ENCODE measurements at regions of chr3 and their contacts with region 1.

Region 1: DNA sequence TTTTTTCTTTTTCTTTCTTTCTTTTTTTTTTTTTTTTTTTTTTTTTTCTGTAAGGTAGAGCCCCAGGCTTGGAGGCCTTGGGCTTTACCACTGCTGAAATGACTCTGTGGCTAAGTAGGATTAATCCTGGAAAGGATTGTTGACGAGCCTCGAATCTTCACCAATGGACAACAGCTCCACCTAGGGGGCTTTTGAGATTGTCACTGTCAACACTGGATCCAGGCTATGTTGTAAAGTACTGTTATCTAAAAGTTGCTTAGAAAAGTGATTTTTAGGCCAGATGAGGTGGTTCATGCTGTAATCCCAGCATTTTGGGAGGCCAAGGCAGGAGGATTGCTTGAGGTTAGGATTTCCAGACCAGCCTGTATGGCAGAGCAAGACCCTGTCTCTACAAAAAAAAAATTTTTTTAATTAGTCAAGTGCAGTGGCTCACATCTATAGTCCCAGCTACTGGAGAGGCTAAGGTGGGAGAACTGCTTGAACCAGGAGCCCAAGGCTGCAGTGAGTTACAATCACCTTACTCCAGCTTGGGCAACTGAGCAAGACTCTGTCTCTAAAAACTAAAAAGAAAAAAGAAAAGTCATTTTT is 41.6 kb downstream of the KLHL18 start:
- DNase-seq: peak in 1 of 2 donors; percentile 77
- ATAC-seq: peak; percentile 83 to 95 (median 91)
- H3K4me3 ChIP-seq: no peak overlapping the region
- H3K27ac ChIP-seq: no peak overlapping the region
- H3K4me1 ChIP-seq: peaks cover 0 to 3% (median 0%) of the 10 kb centered on the region in 9 donors
- H3K27me3 ChIP-seq: no peaks in the 10 kb centered on the region
- CTCF ChIP-seq: peak; percentile 61 to 83 (median 73)

Region 2: DNA sequence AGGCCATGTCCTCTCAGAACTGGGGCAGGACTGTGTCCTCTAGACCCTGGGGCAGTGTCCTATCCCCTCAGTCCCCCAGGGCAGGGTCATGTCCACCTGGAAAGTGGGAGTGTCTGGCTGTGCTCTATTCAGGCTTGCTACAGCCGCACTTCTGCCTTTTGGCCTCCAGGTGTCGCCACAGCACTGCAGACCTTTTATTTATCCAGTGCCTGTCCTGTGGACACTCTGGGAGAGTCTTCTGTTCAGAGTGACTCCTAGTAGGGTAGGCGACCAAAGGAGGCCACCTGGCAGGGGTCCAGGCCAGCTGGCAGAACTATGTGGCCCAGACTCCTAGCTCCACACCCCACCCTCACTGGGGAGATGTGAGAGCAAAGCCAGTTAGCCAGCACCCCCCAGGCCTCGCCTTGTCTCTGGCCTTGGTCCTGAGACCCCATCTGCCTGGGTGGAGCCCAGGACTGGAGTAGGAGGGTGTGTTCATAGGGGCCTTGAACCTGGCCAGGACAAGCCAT is 619.3 kb before region 1 on chr3:
- intact Hi-C with region 1: loop called in 4 of 10 experiments (anchors 2 to 10 kb)
- DNase-seq: peak; percentile 71 to 73
- ATAC-seq: peak; percentile 73 to 91 (median 83)
- H3K4me3 ChIP-seq: no peak overlapping the region
- H3K27ac ChIP-seq: no peak overlapping the region
- H3K4me1 ChIP-seq: peaks cover 11 to 27% (median 17%) of the 10 kb centered on the region in 9 donors
- H3K27me3 ChIP-seq: peaks cover 0 to 37% (median 0%) of the 10 kb centered on the region in 7 donors
- CTCF ChIP-seq: peak; percentile 96 to 99 (median 97)

Region 3: GRCh38 chr3:46866720-46867549 is 457.4 kb before region 1 on chr3:
- intact Hi-C with region 1: loop called in 1 of 10 experiments (anchors 10 kb)
- DNase-seq: peak; percentile 90 to 94
- ATAC-seq: peak; percentile 4 to 62 (median 32)
- H3K4me3 ChIP-seq: peak overlapping the region in 1 of 10 donors; percentile 22
- H3K27ac ChIP-seq: peak overlapping the region; percentile 65 to 98 (median 90)
- H3K4me1 ChIP-seq: peaks cover 23 to 75% (median 48%) of the 10 kb centered on the region in 9 donors
- H3K27me3 ChIP-seq: no peaks in the 10 kb centered on the region
- CTCF ChIP-seq: peak; percentile 87 to 94 (median 91)

Region 4: GRCh38 chr3:47082519-47082918 is 241.9 kb before region 1 on chr3:
- intact Hi-C with region 1: loop called in 1 of 10 experiments (anchors 10 kb)
- DNase-seq: no peak
- ATAC-seq: no peak
- H3K4me3 ChIP-seq: no peak overlapping the region
- H3K27ac ChIP-seq: peak overlapping the region in 1 of 10 donors; percentile 68
- H3K4me1 ChIP-seq: peaks cover 0 to 22% (median 0%) of the 10 kb centered on the region in 9 donors
- H3K27me3 ChIP-seq: no peaks in the 10 kb centered on the region
- CTCF ChIP-seq: no peak

Region 5: GRCh38 chr3:47250309-47251060 is 73.9 kb before region 1 on chr3:
- intact Hi-C with region 1: loop called (anchors 2 to 5 kb)
- DNase-seq: peak; percentile 34 to 54
- ATAC-seq: peak; percentile 63 to 89 (median 82)
- H3K4me3 ChIP-seq: no peak overlapping the region
- H3K27ac ChIP-seq: no peak overlapping the region
- H3K4me1 ChIP-seq: no peaks in the 10 kb centered on the region
- H3K27me3 ChIP-seq: no peaks in the 10 kb centered on the region
- CTCF ChIP-seq: peak; percentile 30 to 74 (median 63)

Region 6: GRCh38 chr3:47282424-47283192 is 41.8 kb before region 1 on chr3 and contains the starts of genes KIF9 and KLHL18:
- intact Hi-C with region 1: loop called in 2 of 10 experiments (anchors 5 kb)
- DNase-seq: peak; percentile 91 to 95
- ATAC-seq: peak; percentile 95 to 99 (median 97)
- H3K4me3 ChIP-seq: peak within 1 kb of the TSS; percentile 57 to 92 (median 79)
- H3K27ac ChIP-seq: peak within 1 kb of the TSS; percentile 74 to 96 (median 94)
- H3K4me1 ChIP-seq: peaks cover 3 to 53% (median 33%) of the 10 kb centered on the region in 9 donors
- H3K27me3 ChIP-seq: no peaks in the 10 kb centered on the region
- CTCF ChIP-seq: peak in 1 of 9 donors; percentile 5
- total RNA-seq, gene KIF9: 6.3 to 12.9 (median 8.5) TPM
- total RNA-seq, gene KLHL18: 32.1 to 52.5 (median 41.6) TPM